ENCODE measurements at regions of chr2 and their contacts with region 1.

Region 1: DNA sequence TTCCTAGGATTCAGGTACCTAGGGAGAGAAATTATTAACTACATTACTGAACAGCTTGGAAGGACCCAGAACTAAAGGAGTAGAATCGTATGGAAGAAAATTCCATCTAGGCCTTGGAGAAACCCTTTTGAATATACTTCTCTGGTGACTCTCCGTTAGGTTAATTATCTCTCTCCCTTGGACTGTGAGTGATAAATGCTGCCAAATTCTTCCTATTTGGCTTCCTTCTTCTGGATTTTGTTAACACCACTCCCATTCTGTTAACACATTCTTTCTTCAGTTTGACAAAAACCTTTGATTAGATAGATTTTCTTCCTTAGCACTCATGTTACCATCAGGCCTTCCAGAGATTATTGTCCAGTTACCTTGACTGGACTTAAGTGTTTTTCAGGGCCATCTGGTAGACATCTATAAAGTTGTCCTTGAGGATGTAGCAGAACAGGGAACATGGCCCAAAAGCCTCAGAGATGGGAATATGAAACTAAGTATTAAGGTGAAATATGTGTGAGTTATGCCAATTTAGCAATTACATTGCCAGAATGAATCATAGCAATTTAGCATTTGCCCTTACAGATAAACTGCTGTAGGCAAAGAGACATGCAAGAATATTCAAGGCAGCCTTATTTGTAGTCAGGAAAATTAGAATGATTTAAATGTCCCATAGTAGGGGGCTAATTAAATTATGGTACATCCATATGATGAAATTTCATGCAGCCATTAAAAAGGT is 6.7 kb downstream of the CYP27A1 start:
- DNase-seq: no peak
- ATAC-seq: no peak
- H3K4me3 Mint-ChIP-seq: no peak overlapping the region
- H3K27ac Mint-ChIP-seq: no peak overlapping the region
- H3K4me1 Mint-ChIP-seq: no peaks in the 10 kb centered on the region
- H3K27me3 Mint-ChIP-seq: peaks cover 35% of the 10 kb centered on the region
- CTCF ChIP-seq: no peak

Region 2: DNA sequence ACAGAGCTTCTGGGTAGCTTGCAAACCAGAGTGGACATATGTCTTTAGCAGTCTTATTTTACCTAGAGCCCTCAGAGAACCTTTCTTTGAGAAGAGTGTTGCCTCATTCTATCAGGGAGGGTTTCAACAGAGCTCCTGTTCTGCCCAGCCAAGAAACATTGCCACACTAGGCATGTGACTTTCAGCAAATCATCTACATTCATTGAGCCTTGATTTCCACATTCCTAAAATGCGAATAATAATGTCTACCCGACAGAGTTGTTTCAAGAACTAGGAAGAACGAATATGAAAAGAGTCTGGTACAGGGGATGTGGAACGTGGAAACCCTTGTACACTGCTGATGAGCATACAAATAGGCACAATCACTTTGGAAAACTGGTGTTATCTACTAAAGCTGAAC is 50.7 kb after region 1 on chr2:
- CTCF ChIA-PET with region 1: no interaction called
- POLR2A ChIA-PET with region 1: no interaction called
- intact Hi-C with region 1: no loop called
- DNase-seq: no peak
- ATAC-seq: no peak
- H3K4me3 Mint-ChIP-seq: no peak overlapping the region
- H3K27ac Mint-ChIP-seq: no peak overlapping the region
- H3K4me1 Mint-ChIP-seq: no peaks in the 10 kb centered on the region
- H3K27me3 Mint-ChIP-seq: peaks cover 39% of the 10 kb centered on the region
- CTCF ChIP-seq: no peak

Region 3: DNA sequence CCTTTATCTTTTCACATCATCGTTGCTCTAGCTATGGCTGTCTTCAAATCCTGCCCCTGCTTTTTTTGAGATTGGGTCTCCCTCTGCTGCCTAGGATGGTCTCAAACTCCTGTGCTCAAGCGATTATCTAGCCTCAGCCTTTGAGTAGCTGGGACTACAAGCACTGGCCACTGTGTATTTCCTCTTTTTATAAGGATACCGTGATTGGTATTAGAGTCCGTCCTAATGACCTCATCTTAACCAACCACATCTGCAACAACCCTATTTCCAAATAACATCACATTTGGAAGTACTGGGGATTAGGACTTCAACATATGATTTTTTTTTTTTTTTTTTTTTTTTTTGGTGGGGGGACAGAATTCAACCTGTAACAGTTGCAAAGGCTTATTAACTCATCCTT is 534.7 kb after region 1 on chr2:
- CTCF ChIA-PET with region 1: no interaction called
- POLR2A ChIA-PET with region 1: no interaction called
- intact Hi-C with region 1: loop called (anchors 5 kb)
- DNase-seq: no peak
- ATAC-seq: no peak
- H3K4me3 Mint-ChIP-seq: no peak overlapping the region
- H3K27ac Mint-ChIP-seq: no peak overlapping the region
- H3K4me1 Mint-ChIP-seq: peaks cover 3% of the 10 kb centered on the region
- H3K27me3 Mint-ChIP-seq: peaks cover 46% of the 10 kb centered on the region
- CTCF ChIP-seq: no peak

Measured in activated B cell treated with CpG ODN at 0.5 μM for 24 hours (primary cell).